ENCODE measurements at regions of chr17 and their contacts with region 1.

Region 1: GRCh38 chr17:59811775-59812538 is 80.8 kb downstream of the TUBD1 start:
- DNase-seq: no peak
- H3K4me3 ChIP-seq: no peak overlapping the region
- H3K4me3 Mint-ChIP-seq: no peak overlapping the region
- H3K27ac Mint-ChIP-seq: no peak overlapping the region
- H3K4me1 ChIP-seq: no peaks in the 10 kb centered on the region; the same call in 1 of the 2 replicates
- H3K4me1 Mint-ChIP-seq: peaks cover 9% of the 10 kb centered on the region
- H3K27me3 ChIP-seq: no peaks in the 10 kb centered on the region
- H3K27me3 Mint-ChIP-seq: no peaks in the 10 kb centered on the region
- CTCF ChIP-seq: no peak

Region 2: DNA sequence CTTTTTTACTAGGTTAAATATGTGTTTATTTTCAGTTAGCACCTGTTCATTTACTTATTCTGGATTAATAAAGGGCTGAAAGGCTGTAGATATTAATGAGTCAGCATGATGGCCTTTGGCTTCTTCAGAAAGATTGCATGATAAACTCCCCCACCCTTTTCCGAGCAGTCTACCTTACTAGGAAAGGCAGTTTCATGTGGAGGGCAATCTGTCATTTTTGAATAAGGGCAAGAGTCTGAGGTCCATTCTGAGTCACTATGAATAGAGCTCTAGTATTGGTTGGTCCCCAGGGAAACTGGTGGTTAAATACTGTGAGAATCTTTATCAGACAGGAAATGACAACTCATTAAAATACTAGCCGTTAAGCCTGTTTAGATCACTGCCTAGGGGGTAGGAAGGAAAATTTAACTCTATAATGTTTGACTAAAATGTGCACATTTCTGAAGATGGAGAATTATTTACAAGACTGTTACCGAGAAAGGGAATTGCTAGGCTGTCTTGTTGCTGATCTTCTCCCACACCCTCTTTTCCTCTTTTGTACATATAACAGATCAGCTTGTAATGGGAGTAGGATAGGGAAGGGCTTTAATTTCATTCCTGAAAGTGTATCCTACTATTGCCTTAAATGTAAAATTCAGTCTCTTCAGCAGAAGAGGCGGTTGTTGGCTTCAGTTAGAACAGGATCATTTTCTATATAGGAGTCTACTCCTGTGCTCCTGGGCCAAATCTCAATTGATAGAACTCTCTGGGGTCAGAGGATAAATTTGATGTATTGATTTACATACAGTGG is 17.5 kb after region 1 on chr17:
- CTCF ChIA-PET with region 1: no interaction called
- POLR2A ChIA-PET with region 1: no interaction called
- intact Hi-C with region 1: loop called (anchors 2 kb)
- DNase-seq: peak; percentile 83 to 85
- H3K4me3 ChIP-seq: no peak overlapping the region
- H3K4me3 Mint-ChIP-seq: peak overlapping the region; percentile 52
- H3K27ac Mint-ChIP-seq: peak overlapping the region; percentile 82
- H3K4me1 ChIP-seq: peaks cover 74% of the 10 kb centered on the region
- H3K4me1 Mint-ChIP-seq: peaks cover 36% of the 10 kb centered on the region
- H3K27me3 ChIP-seq: no peaks in the 10 kb centered on the region
- H3K27me3 Mint-ChIP-seq: no peaks in the 10 kb centered on the region
- CTCF ChIP-seq: no peak

Measured in Caco-2 (cell line).